HepG2 (cell line): ENCODE measurements at regions of chrX and their contacts with region 1.

Region 1: DNA sequence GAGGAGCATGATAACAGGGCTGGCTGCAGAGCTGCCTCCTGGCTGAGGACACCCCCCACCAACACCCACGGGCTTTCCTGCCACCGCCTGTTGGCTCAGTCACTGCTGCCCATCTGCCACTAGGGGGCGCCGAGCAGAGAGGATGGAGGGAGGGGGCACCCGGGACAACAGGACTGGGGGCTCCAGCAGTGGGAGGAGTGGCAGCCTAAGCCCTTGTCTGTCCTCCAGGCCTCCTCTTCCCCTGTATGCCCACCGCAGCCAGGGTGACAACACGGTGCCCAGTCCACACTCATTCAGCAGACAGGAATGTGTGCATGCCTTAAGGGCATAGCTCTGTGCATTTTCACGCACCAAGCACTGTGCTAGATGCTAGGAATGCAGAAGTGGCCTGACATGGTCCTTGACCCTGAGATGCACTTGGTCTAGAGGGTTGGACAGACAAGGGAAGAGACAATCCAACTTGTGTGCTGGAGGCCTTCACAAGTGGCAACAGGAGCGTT is 149.9 kb downstream of the AMMECR1 start:
- DNase-seq: no peak
- ATAC-seq: peak; percentile 67
- H3K4me3 ChIP-seq: no peak overlapping the region
- H3K27ac ChIP-seq: no peak overlapping the region
- H3K4me1 ChIP-seq: no peaks in the 10 kb centered on the region
- H3K27me3 ChIP-seq: no peaks in the 10 kb centered on the region
- CTCF ChIP-seq: peak; percentile 75
- EP300 ChIP-seq: no peak
- POLR2A ChIP-seq: no peak
- RAD21 ChIP-seq: no peak

Region 2: DNA sequence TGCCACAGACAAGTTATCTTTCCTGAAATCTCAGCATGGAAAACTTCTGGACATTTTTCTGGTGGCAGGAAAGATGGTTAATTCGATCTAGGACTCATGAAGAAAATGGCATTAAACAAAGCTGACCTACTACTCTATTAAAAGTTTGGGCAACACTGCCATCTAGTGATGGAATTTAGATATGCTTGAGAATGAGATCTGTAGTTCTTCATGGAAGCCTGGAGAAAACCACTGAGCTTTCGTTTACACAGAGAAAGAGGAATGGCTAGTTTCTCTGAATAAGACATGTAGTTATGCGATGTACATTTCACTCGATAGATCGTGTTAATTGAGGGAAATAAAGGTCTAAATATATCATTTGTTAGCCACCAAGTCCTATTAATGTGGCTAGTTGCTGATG is 679.3 kb after region 1 on chrX:
- CTCF ChIA-PET with region 1: no interaction called
- POLR2A ChIA-PET with region 1: no interaction called
- in situ Hi-C with region 1: loop called (anchors 25 kb)
- intact Hi-C with region 1: no loop called
- DNase-seq: peak; percentile 32
- ATAC-seq: peak; percentile 64
- H3K4me3 ChIP-seq: no peak overlapping the region
- H3K27ac ChIP-seq: no peak overlapping the region
- H3K4me1 ChIP-seq: no peaks in the 10 kb centered on the region
- H3K27me3 ChIP-seq: no peaks in the 10 kb centered on the region
- CTCF ChIP-seq: peak; percentile 52
- EP300 ChIP-seq: no peak
- POLR2A ChIP-seq: no peak
- RAD21 ChIP-seq: no peak